ENCODE measurements at regions of chr7 and their contacts with region 1.

Region 1: DNA sequence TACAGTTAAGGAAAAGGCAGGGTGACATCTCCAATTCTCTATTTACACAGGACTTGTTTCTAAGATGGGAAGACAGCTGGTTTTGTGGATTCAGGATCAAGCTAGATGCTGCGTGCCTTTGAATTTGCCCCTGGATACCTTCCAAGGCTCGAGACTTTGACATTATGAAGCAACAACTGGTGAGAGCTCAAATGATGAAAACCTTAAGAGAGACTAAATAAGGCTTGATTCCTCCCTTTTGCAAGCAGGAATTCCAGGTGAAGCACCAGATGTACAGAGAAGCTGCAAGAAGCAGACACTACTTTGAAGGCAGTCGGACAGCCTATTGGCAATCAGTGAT is 81.0 kb downstream of the ATXN7L1 start:
- DNase-seq: no peak
- H3K4me3 ChIP-seq: no peak overlapping the region
- H3K27ac ChIP-seq: no peak overlapping the region
- H3K4me1 ChIP-seq: peaks cover 3 to 20% (median 6%) of the 10 kb centered on the region in 4 experiments; a peak in 5 of 7 replicates
- H3K27me3 ChIP-seq: no peaks in the 10 kb centered on the region
- CTCF ChIP-seq: no peak
- EP300 ChIP-seq: no peak
- POLR2A ChIP-seq: no peak
- RAD21 ChIP-seq: no peak

Region 2: DNA sequence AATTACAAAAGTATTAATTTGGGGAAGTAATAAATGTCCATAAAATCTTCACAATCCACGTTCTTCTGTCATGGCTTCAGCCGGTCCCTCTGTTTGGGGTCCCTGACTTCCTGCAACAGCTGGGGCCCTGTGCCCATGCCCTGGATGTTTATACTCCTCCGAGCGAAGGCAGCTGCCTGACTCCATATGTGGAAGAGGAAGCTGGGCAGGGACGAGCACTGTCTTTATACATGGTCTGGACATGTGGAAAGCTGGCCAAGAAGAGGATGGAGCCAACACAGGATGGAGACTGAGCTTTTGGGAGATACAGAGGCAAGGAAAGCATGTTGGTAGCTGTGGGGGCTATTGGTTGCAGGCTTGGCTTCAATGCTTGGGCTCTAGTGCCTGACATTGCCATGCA is 97.6 kb before region 1 on chr7:
- CTCF ChIA-PET with region 1: no interaction called
- POLR2A ChIA-PET with region 1: no interaction called
- DNase-seq: no peak
- H3K4me3 ChIP-seq: no peak overlapping the region
- H3K27ac ChIP-seq: peak overlapping the region; percentile 75; the same call in 1 of the 2 replicates
- H3K4me1 ChIP-seq: peaks cover 14 to 25% (median 18%) of the 10 kb centered on the region in 4 experiments
- H3K27me3 ChIP-seq: no peaks in the 10 kb centered on the region
- CTCF ChIP-seq: no peak
- EP300 ChIP-seq: no peak
- POLR2A ChIP-seq: no peak
- RAD21 ChIP-seq: no peak

Region 3: GRCh38 chr7:105776058-105776751 is 19.2 kb before region 1 on chr7:
- CTCF ChIA-PET with region 1: interaction called, 9 read pairs
- POLR2A ChIA-PET with region 1: interaction called, 11 read pairs
- DNase-seq: peak; percentile 71 to 96
- H3K4me3 ChIP-seq: peak overlapping the region in 1 of 4 experiments; percentile 25; a peak in 1 of 8 replicates
- H3K27ac ChIP-seq: peak overlapping the region; percentile 29; the same call in 1 of the 2 replicates
- H3K4me1 ChIP-seq: peaks cover 21 to 34% (median 31%) of the 10 kb centered on the region in 4 experiments
- H3K27me3 ChIP-seq: no peaks in the 10 kb centered on the region
- CTCF ChIP-seq: no peak
- EP300 ChIP-seq: no peak
- POLR2A ChIP-seq: peak in 1 of 2 experiments; percentile 51; a peak in 1 of 3 replicates
- RAD21 ChIP-seq: peak; percentile 2 to 9; a peak in 1 of 4 replicates

Region 4: DNA sequence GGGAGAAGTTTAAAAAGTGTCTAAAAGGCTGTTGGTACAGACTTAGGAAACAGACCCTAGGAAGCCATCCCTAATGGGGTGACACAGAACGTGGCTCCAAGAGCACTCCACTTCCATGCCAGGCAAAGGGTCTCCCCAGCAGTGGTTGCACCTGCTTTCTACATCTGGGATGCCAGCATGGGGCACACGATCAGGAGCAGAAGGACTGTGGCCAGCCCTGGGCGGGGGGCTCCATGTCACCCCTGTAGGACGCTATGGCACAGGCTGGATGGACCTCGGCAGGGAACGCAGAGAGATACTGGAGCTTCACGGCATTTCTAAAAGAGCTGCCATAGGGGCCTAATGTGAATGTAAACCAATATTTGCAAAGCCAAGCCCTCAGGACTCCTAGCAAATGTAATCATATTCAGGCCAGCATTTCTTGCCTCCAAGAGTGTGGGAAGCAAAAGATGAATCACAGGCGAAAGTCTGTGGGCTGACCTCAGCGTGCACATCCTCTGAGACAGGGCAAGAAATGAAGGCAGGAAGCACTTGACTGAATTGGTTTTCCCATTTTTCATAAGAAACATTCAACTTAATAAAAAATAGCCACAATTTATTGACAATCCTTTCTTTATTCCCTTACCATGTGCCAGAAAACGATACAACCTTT is 12.8 kb before region 1 on chr7:
- CTCF ChIA-PET with region 1: interaction called, 15 read pairs
- POLR2A ChIA-PET with region 1: interaction called, 3 read pairs
- DNase-seq: no peak
- H3K4me3 ChIP-seq: no peak overlapping the region
- H3K27ac ChIP-seq: no peak overlapping the region
- H3K4me1 ChIP-seq: peaks cover 0 to under 1% (median 0%) of the 10 kb centered on the region in 4 experiments; a peak in 2 of 7 replicates
- H3K27me3 ChIP-seq: no peaks in the 10 kb centered on the region
- CTCF ChIP-seq: no peak
- EP300 ChIP-seq: no peak
- POLR2A ChIP-seq: no peak
- RAD21 ChIP-seq: no peak

Region 5: GRCh38 chr7:105808703-105809590 is 13.6 kb after region 1 on chr7:
- CTCF ChIA-PET with region 1: interaction called, 20 read pairs
- POLR2A ChIA-PET with region 1: interaction called, 4 read pairs
- DNase-seq: no peak
- H3K4me3 ChIP-seq: no peak overlapping the region
- H3K27ac ChIP-seq: no peak overlapping the region
- H3K4me1 ChIP-seq: peaks cover 6 to 14% (median 9%) of the 10 kb centered on the region in 4 experiments; a peak in 5 of 7 replicates
- H3K27me3 ChIP-seq: no peaks in the 10 kb centered on the region
- CTCF ChIP-seq: no peak
- EP300 ChIP-seq: no peak
- POLR2A ChIP-seq: no peak
- RAD21 ChIP-seq: no peak

Measured in H1 (cell line).